ENCODE measurements at regions of chr3 and their contacts with region 1.

Region 1: GRCh38 chr3:187802928-187803259 is 57.6 kb upstream of the BCL6 start:
- DNase-seq: peak; percentile 94
- H3K4me3 Mint-ChIP-seq: peak overlapping the region; percentile 36
- H3K27ac Mint-ChIP-seq: peak overlapping the region; percentile 97
- H3K4me1 Mint-ChIP-seq: peaks cover 90% of the 10 kb centered on the region
- H3K27me3 Mint-ChIP-seq: no peaks in the 10 kb centered on the region

Region 2: DNA sequence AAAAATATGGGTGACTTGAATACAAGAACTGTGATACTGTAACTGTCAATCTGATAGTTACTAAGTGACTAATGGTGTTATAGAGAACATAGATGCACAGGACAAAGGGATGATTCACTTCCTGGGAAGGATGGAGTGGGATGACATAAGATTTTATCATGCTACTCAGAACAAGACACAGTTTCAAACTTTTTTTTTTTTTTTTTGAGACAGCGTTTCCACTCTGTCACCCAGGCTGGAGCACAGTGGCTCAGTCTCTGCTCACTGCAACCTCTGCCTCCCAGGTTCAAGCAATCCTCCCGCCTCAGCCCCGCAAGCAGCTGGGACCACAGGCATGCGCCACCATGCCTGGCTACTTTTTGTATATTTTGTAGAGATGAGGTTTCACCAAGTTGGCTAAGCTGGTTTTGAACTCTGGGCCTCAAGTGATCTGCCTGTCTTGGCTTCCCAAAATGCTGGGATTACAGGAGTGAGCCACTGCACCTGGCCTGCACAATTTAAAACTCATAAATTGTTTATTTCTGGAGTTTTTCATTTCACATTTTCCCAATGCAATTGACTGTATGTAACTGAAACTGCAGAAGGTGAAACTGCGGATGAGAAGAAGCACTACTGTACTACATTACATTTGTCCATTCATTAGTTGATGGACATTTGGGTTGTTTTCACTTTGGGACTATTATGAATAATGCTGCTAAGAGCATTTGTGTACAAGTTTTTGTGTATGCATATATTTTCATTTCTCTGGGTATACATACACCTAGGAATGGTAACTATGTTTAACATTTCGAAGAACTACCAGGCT is 919.8 kb before region 1 on chr3:
- intact Hi-C with region 1: loop called (anchors 10 kb)
- DNase-seq: peak; percentile 80
- H3K4me3 Mint-ChIP-seq: peak overlapping the region; percentile 52
- H3K27ac Mint-ChIP-seq: peak overlapping the region; percentile 89
- H3K4me1 Mint-ChIP-seq: peaks cover 53% of the 10 kb centered on the region
- H3K27me3 Mint-ChIP-seq: no peaks in the 10 kb centered on the region

Region 3: DNA sequence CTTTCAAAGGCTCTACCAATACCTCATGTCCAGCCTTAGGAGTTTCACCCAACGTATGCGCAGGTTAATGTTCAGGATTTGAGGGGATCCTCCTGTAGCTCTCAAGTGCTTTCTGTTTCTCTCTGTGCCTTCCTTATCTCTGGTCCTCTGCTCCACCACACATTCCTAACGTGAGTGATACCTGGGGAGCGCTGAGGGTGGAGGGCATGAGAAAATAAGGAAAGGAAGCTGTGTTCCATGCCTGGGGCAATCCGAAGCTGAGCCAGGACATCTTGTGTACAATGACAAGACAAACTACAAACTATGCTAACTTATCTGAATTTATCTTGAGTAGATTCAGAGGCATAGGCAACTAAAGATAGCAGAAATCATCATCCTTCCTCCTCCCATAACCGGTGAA is 269.1 kb before region 1 on chr3:
- intact Hi-C with region 1: no loop called
- DNase-seq: no peak
- H3K4me3 Mint-ChIP-seq: no peak overlapping the region
- H3K27ac Mint-ChIP-seq: no peak overlapping the region
- H3K4me1 Mint-ChIP-seq: no peaks in the 10 kb centered on the region
- H3K27me3 Mint-ChIP-seq: peaks cover 12% of the 10 kb centered on the region

Region 4: DNA sequence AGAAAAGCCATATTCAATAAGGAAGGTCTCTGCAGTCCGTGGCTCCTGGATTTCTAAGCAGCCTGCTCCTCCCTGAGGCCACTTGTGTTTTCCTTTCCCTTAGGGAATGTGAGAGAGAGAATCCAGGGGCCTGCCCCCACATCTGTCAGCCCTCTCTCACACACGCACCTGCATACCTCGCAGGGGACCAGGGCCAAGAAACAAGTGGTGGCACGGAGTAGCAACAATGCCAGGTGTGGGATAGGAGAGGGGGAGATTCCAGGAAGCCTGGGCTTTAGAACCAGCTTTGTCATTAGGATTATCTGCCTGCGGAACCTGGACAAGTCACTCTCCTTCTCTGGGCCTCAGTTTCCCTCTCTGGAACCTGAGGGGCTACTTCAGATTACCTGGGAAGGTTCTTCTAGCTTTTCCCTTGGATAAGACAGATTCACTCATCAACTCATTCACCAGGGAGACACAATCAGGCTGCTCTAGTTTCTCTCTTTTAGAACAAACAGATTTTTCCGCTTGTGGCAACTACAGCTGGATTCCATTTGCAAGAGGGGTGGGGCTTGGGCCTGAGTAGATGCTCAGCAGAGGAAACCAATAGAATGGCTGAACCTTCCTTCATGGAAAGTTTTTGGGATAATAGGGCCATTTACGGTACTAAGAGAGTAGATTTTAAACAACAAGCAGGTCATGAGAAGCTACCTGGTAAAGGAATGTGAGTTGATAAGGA is 77.1 kb before region 1 on chr3:
- intact Hi-C with region 1: no loop called
- DNase-seq: no peak
- H3K4me3 Mint-ChIP-seq: no peak overlapping the region
- H3K27ac Mint-ChIP-seq: no peak overlapping the region
- H3K4me1 Mint-ChIP-seq: peaks cover 1% of the 10 kb centered on the region
- H3K27me3 Mint-ChIP-seq: no peaks in the 10 kb centered on the region

Region 5: DNA sequence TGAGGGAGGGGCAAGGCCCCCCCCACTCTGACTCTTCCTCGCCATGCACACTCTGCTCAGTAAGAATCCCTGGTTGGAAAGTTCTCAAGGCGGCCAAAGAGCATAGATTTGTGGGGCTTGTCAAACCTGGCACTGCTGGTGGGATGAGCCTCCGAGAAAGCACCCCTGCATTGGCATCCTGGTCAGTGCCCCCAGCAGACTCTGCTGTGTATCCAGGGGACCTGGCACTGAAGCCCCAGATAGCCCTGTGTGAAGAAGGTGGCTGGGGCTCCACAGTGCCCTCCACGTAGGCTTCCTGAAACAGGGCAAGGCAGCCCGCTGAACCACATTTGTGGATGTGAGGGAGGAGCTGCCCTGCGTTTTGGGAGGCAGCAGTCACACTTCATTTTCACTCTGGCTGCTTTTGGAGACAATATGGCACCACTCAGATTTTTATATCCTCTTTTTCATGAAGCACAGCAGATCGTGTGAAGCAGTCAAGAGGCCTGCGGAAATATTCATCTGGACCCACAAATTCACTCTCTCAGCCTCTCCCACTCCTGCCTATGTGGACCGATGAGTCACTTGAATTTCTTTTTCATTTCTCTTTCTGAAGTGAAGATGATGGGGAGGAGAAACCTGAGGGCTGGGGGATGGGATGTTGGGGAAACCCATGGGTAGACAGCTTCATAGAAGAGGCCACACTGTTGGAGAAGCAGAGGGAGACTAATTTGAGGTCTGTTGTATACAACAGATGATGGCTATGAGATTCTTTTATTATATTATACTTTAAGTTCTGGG is 31.1 kb after region 1 on chr3:
- intact Hi-C with region 1: loop called (anchors 1 kb)
- DNase-seq: no peak
- H3K4me3 Mint-ChIP-seq: no peak overlapping the region
- H3K27ac Mint-ChIP-seq: peak overlapping the region; percentile 23
- H3K4me1 Mint-ChIP-seq: peaks cover 33% of the 10 kb centered on the region
- H3K27me3 Mint-ChIP-seq: no peaks in the 10 kb centered on the region

Region 6: GRCh38 chr3:187974871-187975271 is 172.0 kb after region 1 on chr3:
- intact Hi-C with region 1: loop called (anchors 2 kb)
- DNase-seq: peak; percentile 73
- H3K4me3 Mint-ChIP-seq: peak overlapping the region; percentile 73
- H3K27ac Mint-ChIP-seq: peak overlapping the region; percentile 94
- H3K4me1 Mint-ChIP-seq: peaks cover 63% of the 10 kb centered on the region
- H3K27me3 Mint-ChIP-seq: no peaks in the 10 kb centered on the region

Region 7: GRCh38 chr3:188154014-188154808 is 351.3 kb after region 1 on chr3 and contains the start of gene LPP:
- intact Hi-C with region 1: loop called (anchors 5 kb)
- DNase-seq: peak; percentile 97
- H3K4me3 Mint-ChIP-seq: peak within 1 kb of the TSS; percentile 86
- H3K27ac Mint-ChIP-seq: peak within 1 kb of the TSS; percentile 90
- H3K4me1 Mint-ChIP-seq: peaks cover 58% of the 10 kb centered on the region
- H3K27me3 Mint-ChIP-seq: no peaks in the 10 kb centered on the region
- total RNA-seq, gene LPP: 39.5 and 41.4 TPM in 2 replicates

Region 8: GRCh38 chr3:188400494-188401243 is 597.8 kb after region 1 on chr3:
- intact Hi-C with region 1: loop called (anchors 5 kb)
- DNase-seq: peak; percentile 81
- H3K4me3 Mint-ChIP-seq: peak overlapping the region; percentile 18
- H3K27ac Mint-ChIP-seq: peak overlapping the region; percentile 68
- H3K4me1 Mint-ChIP-seq: peaks cover 62% of the 10 kb centered on the region
- H3K27me3 Mint-ChIP-seq: no peaks in the 10 kb centered on the region

Region 9: DNA sequence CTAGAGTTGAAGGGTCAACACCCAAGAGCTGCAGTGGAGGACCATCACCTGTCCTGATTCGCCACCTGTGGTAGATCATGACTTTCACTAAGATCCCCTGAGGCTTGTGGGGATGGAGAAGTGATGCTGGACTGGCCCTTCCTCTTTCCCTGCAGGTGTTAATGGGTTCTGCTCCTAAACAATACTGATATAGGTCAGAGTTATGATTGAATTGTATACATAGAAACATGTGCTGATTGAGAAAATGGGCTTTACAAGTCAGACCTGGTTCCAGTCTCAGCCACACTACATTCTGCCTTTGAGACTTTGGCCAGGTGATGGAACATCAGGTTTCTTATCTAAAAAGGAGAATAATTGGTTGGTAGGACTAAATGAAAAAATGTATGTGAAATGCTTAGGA is 950.0 kb after region 1 on chr3:
- intact Hi-C with region 1: loop called (anchors 2 kb)
- DNase-seq: no peak
- H3K4me3 Mint-ChIP-seq: no peak overlapping the region
- H3K27ac Mint-ChIP-seq: peak overlapping the region; percentile 2
- H3K4me1 Mint-ChIP-seq: peaks cover 21% of the 10 kb centered on the region
- H3K27me3 Mint-ChIP-seq: peaks cover 2% of the 10 kb centered on the region

Measured in activated CD4-positive, alpha-beta T cell treated with anti-CD3 and anti-CD28 coated beads, Interleukin-2, amount 10 ng/mL, durations not matched to agents 24 days and 14 days (primary cell).